Stomach (tissue), 19 donors: ENCODE measurements at regions of chr18 and their contacts with region 1.

Region 1: GRCh38 chr18:26771524-26771923 is 94.0 kb downstream of the AQP4 start:
- DNase-seq: peak; percentile 34 to 42
- H3K4me3 ChIP-seq: no peak overlapping the region
- H3K27ac ChIP-seq: no peak overlapping the region
- H3K4me1 ChIP-seq: no peaks in the 10 kb centered on the region
- H3K27me3 ChIP-seq: peaks cover 0 to 2% (median 0%) of the 10 kb centered on the region in 3 donors
- CTCF ChIP-seq: peak in 5 of 7 experiments; percentile 23 to 53 (median 30)
- EP300 ChIP-seq: no peak
- POLR2A ChIP-seq: no peak

Region 2: DNA sequence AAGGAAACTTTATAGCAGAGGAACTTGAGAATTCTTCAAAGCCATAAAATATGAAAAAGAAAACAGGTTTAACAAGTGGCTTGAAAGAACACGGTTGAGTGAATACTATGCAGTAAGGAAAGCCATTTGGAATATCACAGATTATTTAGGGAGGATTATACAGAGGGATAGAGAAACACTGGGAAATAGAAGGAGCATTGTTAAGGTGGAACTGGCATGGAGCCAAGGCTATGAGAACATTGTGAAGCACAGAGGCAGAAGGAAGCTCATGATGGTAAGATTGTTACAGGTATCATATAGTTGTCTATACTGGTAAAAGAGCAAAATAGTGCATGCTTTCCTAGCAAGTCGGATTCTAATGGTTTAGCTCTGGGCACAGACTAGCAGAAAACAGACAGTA is 768.2 kb before region 1 on chr18:
- intact Hi-C with region 1: no loop called
- DNase-seq: peak in 1 of 2 donors; percentile 36
- H3K4me3 ChIP-seq: no peak overlapping the region
- H3K27ac ChIP-seq: no peak overlapping the region
- H3K4me1 ChIP-seq: no peaks in the 10 kb centered on the region
- H3K27me3 ChIP-seq: no peaks in the 10 kb centered on the region
- CTCF ChIP-seq: no peak
- EP300 ChIP-seq: no peak
- POLR2A ChIP-seq: no peak

Region 3: GRCh38 chr18:26621161-26622026 is 150.1 kb before region 1 on chr18:
- intact Hi-C with region 1: loop called (anchors 10 kb)
- DNase-seq: peak; percentile 48 to 59
- H3K4me3 ChIP-seq: no peak overlapping the region
- H3K27ac ChIP-seq: no peak overlapping the region
- H3K4me1 ChIP-seq: no peaks in the 10 kb centered on the region
- H3K27me3 ChIP-seq: no peaks in the 10 kb centered on the region
- CTCF ChIP-seq: peak in 5 of 7 experiments; percentile 32 to 71 (median 55)
- EP300 ChIP-seq: no peak
- POLR2A ChIP-seq: no peak

Region 4: GRCh38 chr18:26840965-26841364 is 69.4 kb after region 1 on chr18:
- intact Hi-C with region 1: no loop called
- DNase-seq: no peak
- H3K4me3 ChIP-seq: no peak overlapping the region
- H3K27ac ChIP-seq: no peak overlapping the region
- H3K4me1 ChIP-seq: no peaks in the 10 kb centered on the region
- H3K27me3 ChIP-seq: no peaks in the 10 kb centered on the region
- CTCF ChIP-seq: no peak
- EP300 ChIP-seq: no peak
- POLR2A ChIP-seq: no peak

Region 5: GRCh38 chr18:26863122-26863879 is 91.8 kb after region 1 on chr18:
- intact Hi-C with region 1: no loop called
- DNase-seq: peak; percentile 85 to 92
- H3K4me3 ChIP-seq: peak overlapping the region; percentile 37 to 44 (median 39)
- H3K27ac ChIP-seq: peak overlapping the region; percentile 59 to 90 (median 73)
- H3K4me1 ChIP-seq: peaks cover 7 to 36% (median 13%) of the 10 kb centered on the region in 4 donors
- H3K27me3 ChIP-seq: peaks cover 0 to 22% (median 13%) of the 10 kb centered on the region in 3 donors
- CTCF ChIP-seq: no peak
- EP300 ChIP-seq: no peak
- POLR2A ChIP-seq: peak in 1 of 4 donors; percentile 21